Transverse colon (tissue), 4 donors: ENCODE measurements at regions of chr14 and their contacts with region 1.

Region 1: GRCh38 chr14:74018586-74019407 is at the starts of genes BBOF1 and ENTPD5:
- DNase-seq: peak; percentile 90
- H3K4me3 ChIP-seq: peak within 1 kb of the TSS; percentile 58 to 79 (median 65)
- H3K27ac ChIP-seq: peak within 1 kb of the TSS; percentile 93 to 100 (median 97)
- H3K4me1 ChIP-seq: peaks cover 0 to 25% (median 14%) of the 10 kb centered on the region in 4 donors
- H3K27me3 ChIP-seq: no peaks in the 10 kb centered on the region
- CTCF ChIP-seq: peak in 1 of 5 experiments; percentile 30
- EP300 ChIP-seq: no peak
- POLR2A ChIP-seq: peak; percentile 91
- total RNA-seq, gene BBOF1: 4.1 to 7.5 (median 5.4) TPM
- total RNA-seq, gene ENTPD5: 60.9 to 311 (median 219) TPM

Region 2: DNA sequence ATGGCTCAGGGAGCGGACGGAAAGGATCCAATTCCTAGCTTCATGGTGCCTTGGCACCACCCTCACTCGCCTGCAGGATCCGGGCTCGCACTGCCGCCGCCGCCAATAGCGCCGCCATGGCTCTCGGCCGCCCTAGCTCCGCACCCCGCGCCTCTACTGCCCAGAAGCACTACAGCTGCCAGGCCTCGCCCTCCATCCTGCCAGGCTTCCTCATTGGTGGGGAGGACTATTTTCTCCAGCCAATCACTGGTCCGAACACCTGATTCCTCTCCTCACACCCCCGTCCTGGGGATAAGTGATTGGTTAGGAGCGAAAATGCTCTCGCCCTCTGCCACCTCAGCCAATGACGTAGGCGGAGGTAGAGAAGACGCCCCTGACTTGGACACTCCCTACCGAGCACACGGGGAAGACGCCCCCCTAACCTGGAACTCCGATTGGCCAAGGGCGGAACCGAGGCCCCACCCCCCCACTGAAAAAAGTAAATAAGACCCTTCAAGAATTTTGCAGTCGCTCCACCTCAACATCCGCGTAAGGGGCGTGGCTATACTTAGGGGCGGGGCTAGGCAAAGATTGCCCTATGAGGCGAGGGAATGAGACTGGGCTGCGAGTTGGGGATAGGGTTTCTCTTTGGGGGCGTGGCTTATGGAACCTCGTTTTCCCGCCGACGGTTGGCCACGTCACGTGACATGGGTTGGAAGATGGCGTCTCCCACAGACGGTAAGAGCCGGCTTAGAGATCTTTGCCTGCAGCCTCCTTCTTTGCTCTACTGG is 65.7 kb after region 1 on chr14 and contains the starts of genes ALDH6A1 and LIN52:
- in situ Hi-C with region 1: no loop called
- intact Hi-C with region 1: loop called (anchors 1 kb)
- DNase-seq: peak; percentile 100
- H3K4me3 ChIP-seq: peak within 1 kb of the TSS; percentile 66 to 98 (median 91)
- H3K27ac ChIP-seq: peak within 1 kb of the TSS; percentile 82 to 92 (median 91)
- H3K4me1 ChIP-seq: peaks cover 4 to 23% (median 18%) of the 10 kb centered on the region in 4 donors
- H3K27me3 ChIP-seq: no peaks in the 10 kb centered on the region
- CTCF ChIP-seq: no peak
- EP300 ChIP-seq: no peak
- POLR2A ChIP-seq: peak; percentile 93
- total RNA-seq, gene ALDH6A1: 19.1 to 40.0 (median 27.5) TPM
- total RNA-seq, gene LIN52: 1.1 to 5.4 (median 4.6) TPM